ENCODE measurements at regions of chr5 and their contacts with region 1.

Region 1: DNA sequence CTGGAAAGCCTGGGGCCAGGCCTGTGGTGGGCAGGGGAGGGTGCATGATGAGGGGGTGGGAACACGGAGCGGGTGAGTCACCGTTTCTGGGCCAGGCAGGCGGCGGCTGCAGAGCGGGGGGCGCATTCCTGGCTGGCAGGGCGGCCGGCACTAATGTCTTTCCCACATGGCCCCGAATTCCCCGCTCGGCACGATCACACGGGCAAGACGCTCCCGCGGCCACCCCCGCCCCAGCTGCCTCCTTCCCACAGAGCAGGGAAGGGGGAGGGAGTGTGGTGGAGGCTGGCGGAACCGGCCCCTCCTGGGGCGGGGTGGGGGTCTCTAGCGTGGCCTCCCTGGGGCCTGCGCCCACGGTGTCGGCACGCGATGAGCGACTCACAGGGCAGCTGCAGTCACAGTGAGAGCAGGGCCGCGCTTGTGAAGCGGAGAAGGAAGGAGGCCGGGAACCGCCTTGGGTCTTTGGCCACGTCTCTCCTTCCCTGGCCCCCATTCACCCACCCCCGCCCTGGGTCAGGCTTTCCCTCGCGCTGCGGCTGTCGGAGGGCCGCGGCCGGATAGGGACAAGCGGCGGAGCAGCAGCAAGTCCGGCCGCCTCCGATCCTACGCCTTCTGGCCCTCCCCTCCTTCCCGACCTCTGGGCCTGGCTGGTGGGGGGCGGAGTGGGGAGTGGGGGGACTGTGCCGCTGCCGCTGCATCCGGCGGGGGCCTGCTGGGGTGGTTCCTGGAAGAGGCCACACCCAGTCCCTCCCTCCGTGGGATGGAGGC is 48.9 kb downstream of the CXXC5 start:
- DNase-seq: peak in 7 of 10 donors; percentile 60 to 91 (median 75)
- H3K4me3 ChIP-seq: peak overlapping the region; percentile 14 to 70 (median 50)
- H3K27ac ChIP-seq: peak overlapping the region; percentile 40 to 95 (median 89)
- H3K27me3 ChIP-seq: no peaks in the 10 kb centered on the region
- CTCF ChIP-seq: no peak

Region 2: GRCh38 chr5:139422307-139422893 is 274.7 kb before region 1 on chr5:
- intact Hi-C with region 1: loop called in 1 of 2 experiments (anchors 10 kb)
- DNase-seq: peak in 3 of 10 donors; percentile 11 to 46 (median 38)
- H3K4me3 ChIP-seq: no peak overlapping the region
- H3K27ac ChIP-seq: peak overlapping the region in 37 of 59 donors; percentile 1 to 72 (median 43)
- H3K27me3 ChIP-seq: no peaks in the 10 kb centered on the region
- CTCF ChIP-seq: peak; percentile 53 to 94 (median 81)

Region 3: DNA sequence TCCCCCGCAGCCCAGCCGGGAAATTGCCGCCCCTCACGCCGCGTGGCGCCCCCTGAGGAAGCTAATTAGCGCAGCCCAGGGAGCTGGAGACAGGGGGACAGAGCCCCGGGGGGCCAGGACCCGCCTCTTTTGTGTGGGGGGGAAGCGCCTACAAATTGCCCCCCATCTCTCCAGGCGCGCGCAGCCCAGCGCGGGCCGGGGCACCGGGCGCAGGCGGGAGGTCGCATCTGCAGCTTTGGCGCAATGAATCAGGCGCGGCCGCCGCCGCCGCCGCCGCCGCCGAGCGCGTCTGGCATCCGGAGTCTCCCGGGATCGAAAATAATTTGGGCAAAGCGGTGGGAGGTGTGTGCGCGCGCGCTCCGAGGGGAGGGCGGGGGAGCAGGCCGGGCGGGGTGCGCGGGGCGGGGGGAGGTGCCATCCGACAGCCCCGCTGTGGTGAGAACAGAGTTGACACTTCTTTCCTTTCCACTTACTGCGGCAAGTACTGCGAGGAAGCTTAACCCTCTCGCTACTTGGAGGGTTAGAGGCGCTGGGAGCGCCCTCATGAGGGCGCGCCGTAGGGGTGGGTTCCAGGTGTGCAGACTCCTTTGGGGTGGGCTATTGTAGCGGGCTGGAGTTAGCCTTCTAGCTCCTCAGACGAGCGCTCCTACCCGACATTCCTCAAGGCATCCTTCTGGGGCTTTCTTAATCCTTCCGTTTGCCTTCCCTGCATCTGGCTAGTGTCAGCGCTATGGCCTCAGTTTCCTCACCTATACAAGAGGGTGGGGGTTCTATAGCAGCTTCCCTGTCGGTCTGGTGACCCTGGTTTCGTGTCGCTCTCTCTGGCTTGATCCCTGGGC is 14.2 kb after region 1 on chr5:
- intact Hi-C with region 1: loop called in 1 of 2 experiments (anchors 2 kb)
- DNase-seq: peak in 8 of 10 donors; percentile 42 to 77 (median 70)
- H3K4me3 ChIP-seq: peak overlapping the region; percentile 37 to 82 (median 66)
- H3K27ac ChIP-seq: peak overlapping the region; percentile 76 to 98 (median 95)
- H3K27me3 ChIP-seq: no peaks in the 10 kb centered on the region
- CTCF ChIP-seq: peak in 27 of 56 donors; percentile 0 to 38 (median 17)

Region 4: GRCh38 chr5:139745800-139746690 is 49.0 kb after region 1 on chr5:
- intact Hi-C with region 1: loop called in 1 of 2 experiments (anchors 5 kb)
- DNase-seq: peak in 9 of 10 donors; percentile 58 to 89 (median 77)
- H3K4me3 ChIP-seq: peak overlapping the region; percentile 37 to 75 (median 62)
- H3K27ac ChIP-seq: peak overlapping the region; percentile 59 to 100 (median 96)
- H3K27me3 ChIP-seq: no peaks in the 10 kb centered on the region
- CTCF ChIP-seq: no peak

Region 5: GRCh38 chr5:139765409-139766217 is 68.5 kb after region 1 on chr5:
- intact Hi-C with region 1: loop called (anchors 2 to 5 kb)
- DNase-seq: peak in 9 of 10 donors; percentile 68 to 83 (median 78)
- H3K4me3 ChIP-seq: peak overlapping the region; percentile 43 to 84 (median 63)
- H3K27ac ChIP-seq: peak overlapping the region; percentile 66 to 96 (median 92)
- H3K27me3 ChIP-seq: no peaks in the 10 kb centered on the region
- CTCF ChIP-seq: peak; percentile 85 to 100 (median 99)

Region 6: GRCh38 chr5:139844472-139845145 is 147.5 kb after region 1 on chr5:
- intact Hi-C with region 1: no loop called
- DNase-seq: peak; percentile 44 to 91 (median 84)
- H3K4me3 ChIP-seq: no peak overlapping the region
- H3K27ac ChIP-seq: peak overlapping the region in 11 of 59 donors; percentile 9 to 63 (median 24)
- H3K27me3 ChIP-seq: no peaks in the 10 kb centered on the region
- CTCF ChIP-seq: peak; percentile 55 to 93 (median 83)